HepG2 (cell line): ENCODE measurements at regions of chr6 and their contacts with region 1.

Region 1: GRCh38 chr6:31143148-31143547 is 4.3 kb upstream of the PSORS1C2 start:
- DNase-seq: no peak
- ATAC-seq: no peak
- H3K4me3 ChIP-seq: no peak overlapping the region
- H3K27ac ChIP-seq: no peak overlapping the region
- H3K4me1 ChIP-seq: no peaks in the 10 kb centered on the region
- H3K27me3 ChIP-seq: no peaks in the 10 kb centered on the region
- CTCF ChIP-seq: no peak
- EP300 ChIP-seq: no peak
- POLR2A ChIP-seq: no peak
- RAD21 ChIP-seq: no peak

Region 2: DNA sequence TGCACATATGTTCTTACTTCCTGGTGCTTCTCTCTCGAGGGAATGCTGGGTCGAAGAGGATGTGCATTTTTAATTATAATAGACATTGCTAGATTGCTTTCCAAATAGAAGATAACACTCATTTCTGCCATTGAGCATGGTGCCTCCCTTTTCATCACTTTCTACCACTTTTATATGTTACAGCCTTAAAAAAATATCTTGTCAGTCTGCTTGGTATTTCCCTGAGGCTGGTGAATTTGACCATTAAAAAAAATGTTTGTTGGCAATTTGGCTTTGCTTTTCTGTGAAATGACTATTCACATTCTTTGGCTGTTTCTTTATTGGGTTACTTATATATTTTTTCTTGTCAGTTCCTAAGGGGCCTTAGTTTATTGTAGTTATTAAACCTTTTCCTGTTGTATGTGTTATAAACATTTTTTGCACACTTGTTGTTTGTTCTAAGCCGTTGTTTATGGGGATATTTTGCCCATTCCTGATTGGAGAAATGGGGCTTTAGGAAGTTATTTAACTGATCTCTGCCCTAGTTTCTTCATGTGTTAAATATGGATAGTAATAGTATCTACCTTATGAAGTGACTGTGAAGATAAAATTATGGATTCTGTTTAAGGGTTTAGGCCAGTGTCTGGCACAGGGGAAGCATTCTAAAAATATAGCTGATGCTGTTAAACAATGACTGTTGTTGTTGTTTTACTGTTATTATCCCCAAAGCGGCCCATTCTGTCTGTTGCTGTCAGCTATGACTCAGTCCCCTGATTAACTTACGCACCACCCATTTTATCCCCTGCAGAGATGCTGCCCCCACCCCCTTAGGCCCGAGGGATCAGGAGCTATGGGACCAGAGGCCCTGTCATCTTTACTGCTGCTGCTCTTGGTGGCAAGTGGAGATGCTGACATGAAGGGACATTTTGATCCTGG is 255.0 kb before region 1 on chr6:
- CTCF ChIA-PET with region 1: no interaction called
- POLR2A ChIA-PET with region 1: no interaction called
- in situ Hi-C with region 1: no loop called
- intact Hi-C with region 1: no loop called
- DNase-seq: no peak
- ATAC-seq: no peak
- H3K4me3 ChIP-seq: no peak overlapping the region
- H3K27ac ChIP-seq: no peak overlapping the region
- H3K4me1 ChIP-seq: peaks cover 29% of the 10 kb centered on the region
- H3K27me3 ChIP-seq: no peaks in the 10 kb centered on the region; a peak in 1 of 5 replicates
- CTCF ChIP-seq: no peak
- EP300 ChIP-seq: no peak
- POLR2A ChIP-seq: no peak
- RAD21 ChIP-seq: no peak

Region 3: DNA sequence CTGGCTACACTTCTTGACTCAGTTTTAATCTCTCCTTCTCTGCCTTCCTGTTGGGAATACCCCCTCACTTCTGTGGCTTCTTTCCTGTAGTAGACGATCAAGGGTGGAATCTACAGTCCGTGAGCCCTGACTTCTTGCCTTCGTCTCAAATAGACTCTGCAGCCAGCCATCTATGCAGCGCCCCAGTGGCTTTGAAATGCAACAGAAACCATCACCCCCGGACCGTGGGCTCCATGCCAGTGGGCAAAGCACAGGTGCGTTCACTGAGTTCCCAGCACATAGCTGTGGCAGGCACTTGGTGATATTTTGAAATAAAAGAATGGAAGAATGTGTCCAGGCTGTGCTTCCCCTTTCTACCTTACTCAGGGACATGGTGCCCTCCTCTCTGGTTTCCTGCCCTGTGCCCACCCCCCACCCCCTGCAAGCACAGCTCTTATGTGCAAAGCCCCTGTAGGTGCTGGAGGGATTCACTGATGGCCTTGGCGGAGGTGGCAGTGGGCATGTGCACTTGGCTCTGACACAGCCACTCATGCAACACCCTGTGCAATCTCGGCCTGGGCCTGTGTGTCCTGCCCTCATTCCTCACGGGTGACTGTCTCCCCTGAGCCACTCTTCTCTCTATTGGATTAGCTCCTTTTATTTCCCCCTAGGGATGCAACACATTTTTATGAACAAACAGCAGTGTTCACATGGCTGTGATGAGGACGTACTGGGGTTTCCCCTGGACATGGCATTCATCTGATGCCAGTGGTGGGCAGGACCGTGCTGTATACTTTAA is 17.4 kb before region 1 on chr6:
- CTCF ChIA-PET with region 1: no interaction called
- POLR2A ChIA-PET with region 1: no interaction called
- in situ Hi-C with region 1: no loop called
- intact Hi-C with region 1: loop called (anchors 2 kb)
- DNase-seq: no peak
- ATAC-seq: no peak
- H3K4me3 ChIP-seq: no peak overlapping the region
- H3K27ac ChIP-seq: no peak overlapping the region
- H3K4me1 ChIP-seq: peaks cover 7% of the 10 kb centered on the region
- H3K27me3 ChIP-seq: peaks cover 0 to 49% of the 10 kb centered on the region in 2 experiments; a peak in 3 of 5 replicates
- CTCF ChIP-seq: no peak
- EP300 ChIP-seq: no peak
- POLR2A ChIP-seq: no peak
- RAD21 ChIP-seq: no peak

Region 4: GRCh38 chr6:31163922-31164321 is 20.8 kb after region 1 on chr6:
- CTCF ChIA-PET with region 1: no interaction called
- POLR2A ChIA-PET with region 1: no interaction called
- in situ Hi-C with region 1: no loop called
- intact Hi-C with region 1: no loop called
- DNase-seq: no peak
- ATAC-seq: no peak
- H3K4me3 ChIP-seq: no peak overlapping the region
- H3K27ac ChIP-seq: no peak overlapping the region
- H3K4me1 ChIP-seq: peaks cover 18% of the 10 kb centered on the region
- H3K27me3 ChIP-seq: no peaks in the 10 kb centered on the region
- CTCF ChIP-seq: no peak
- EP300 ChIP-seq: no peak
- POLR2A ChIP-seq: no peak
- RAD21 ChIP-seq: no peak

Region 5: GRCh38 chr6:31366693-31367470 is 223.7 kb after region 1 on chr6:
- CTCF ChIA-PET with region 1: interaction called, 16 read pairs
- POLR2A ChIA-PET with region 1: no interaction called
- in situ Hi-C with region 1: loop called (anchors 5 kb)
- intact Hi-C with region 1: no loop called
- DNase-seq: peak; percentile 80
- ATAC-seq: peak; percentile 100
- H3K4me3 ChIP-seq: peak overlapping the region in 1 of 3 experiments; percentile 47; a peak in 1 of 6 replicates
- H3K27ac ChIP-seq: no peak overlapping the region
- H3K4me1 ChIP-seq: 0 out of 2 replicates have a peak, but pooled peaks cover 9% of the 10 kb centered on the region
- H3K27me3 ChIP-seq: peaks cover 2 to 20% of the 10 kb centered on the region in 2 experiments; a peak in 4 of 5 replicates
- CTCF ChIP-seq: peak; percentile 98
- EP300 ChIP-seq: no peak
- POLR2A ChIP-seq: no peak
- RAD21 ChIP-seq: peak; percentile 99